Activated CD4-positive, alpha-beta T cell treated with anti-CD3 and anti-CD28 coated beads, Interleukin-2, amount 10 ng/mL, durations not matched to agents 24 days and 14 days (primary cell): ENCODE measurements at regions of chr9 and their contacts with region 1.

Region 1: DNA sequence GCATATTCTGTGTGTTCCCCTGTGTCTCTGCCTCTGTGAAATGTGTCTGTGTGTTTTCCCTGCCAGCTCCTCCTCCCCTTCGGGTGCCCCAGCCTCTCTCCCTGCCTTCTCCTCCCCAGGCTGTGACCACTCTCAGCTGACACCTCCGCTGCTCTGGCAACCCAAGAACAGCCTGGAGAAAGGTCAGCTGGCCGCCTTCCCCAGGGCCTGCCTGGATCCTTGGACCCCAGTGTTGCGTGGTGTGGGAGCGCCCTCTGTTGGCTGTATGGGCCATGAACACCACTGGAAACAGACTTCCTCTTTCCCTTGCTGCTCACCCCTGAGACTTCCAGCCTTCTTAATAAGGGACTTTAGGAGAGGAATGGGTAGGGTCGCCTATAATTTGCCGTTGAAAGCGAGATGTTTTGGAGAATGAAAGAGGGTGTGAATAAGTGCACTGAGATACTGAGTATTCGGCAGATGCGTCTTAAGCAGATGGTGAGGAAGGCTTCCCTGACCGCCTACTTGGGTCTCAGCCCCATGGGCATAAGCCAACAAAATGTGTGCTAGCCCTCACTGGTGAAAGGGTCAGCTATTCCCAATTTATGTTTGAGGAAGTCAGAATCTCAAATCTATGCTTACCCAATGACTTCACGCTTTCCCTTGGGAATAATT is 114.9 kb upstream of the TRIM32 start:
- DNase-seq: peak; percentile 67
- H3K4me3 Mint-ChIP-seq: no peak overlapping the region
- H3K27ac Mint-ChIP-seq: no peak overlapping the region
- H3K4me1 Mint-ChIP-seq: no peaks in the 10 kb centered on the region
- H3K27me3 Mint-ChIP-seq: no peaks in the 10 kb centered on the region

Region 2: DNA sequence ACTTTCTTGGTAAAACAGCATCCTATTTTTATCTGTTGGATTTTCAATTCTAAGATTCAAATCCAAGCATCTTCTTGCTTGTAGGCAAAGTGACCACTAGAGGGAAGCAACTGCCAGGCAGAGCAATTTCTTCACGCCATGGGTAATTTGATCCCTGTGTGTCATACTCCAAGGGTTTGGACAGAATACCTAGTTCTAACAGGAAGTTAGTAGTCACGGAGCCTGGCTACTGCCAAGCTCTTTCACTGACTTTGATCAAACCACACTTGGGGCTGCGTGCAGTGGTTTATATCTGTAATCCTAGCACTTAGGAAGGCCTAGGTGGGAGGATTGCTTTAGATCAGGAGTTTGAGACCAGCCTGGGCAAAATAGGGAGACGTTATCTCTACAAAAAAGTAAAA is 980.6 kb before region 1 on chr9:
- intact Hi-C with region 1: loop called (anchors 5 kb)
- DNase-seq: peak; percentile 57
- H3K4me3 Mint-ChIP-seq: no peak overlapping the region
- H3K27ac Mint-ChIP-seq: no peak overlapping the region
- H3K4me1 Mint-ChIP-seq: no peaks in the 10 kb centered on the region
- H3K27me3 Mint-ChIP-seq: peaks cover 15% of the 10 kb centered on the region

Region 3: DNA sequence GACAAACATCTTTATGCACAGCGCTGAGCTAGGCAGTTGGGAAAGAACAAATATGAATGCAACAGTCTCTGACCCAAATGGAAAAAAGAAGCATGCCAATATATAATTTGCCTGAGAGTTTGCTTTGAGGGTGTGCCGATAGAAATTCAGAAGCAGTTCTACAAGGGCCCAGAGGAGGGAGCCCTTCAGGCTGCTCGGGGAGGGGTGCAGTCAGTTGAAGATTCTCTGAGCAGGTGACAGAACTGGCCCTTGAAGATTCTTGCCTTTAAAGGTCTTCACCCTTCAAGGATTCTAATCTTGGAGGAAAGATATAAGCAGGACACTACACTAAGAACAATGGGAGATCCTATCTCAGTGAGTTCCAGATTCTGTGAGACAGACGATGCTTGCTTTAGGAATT is 422.4 kb before region 1 on chr9:
- intact Hi-C with region 1: loop called (anchors 10 kb)
- DNase-seq: no peak
- H3K4me3 Mint-ChIP-seq: no peak overlapping the region
- H3K27ac Mint-ChIP-seq: no peak overlapping the region
- H3K4me1 Mint-ChIP-seq: peaks cover 2% of the 10 kb centered on the region
- H3K27me3 Mint-ChIP-seq: peaks cover 39% of the 10 kb centered on the region

Region 4: DNA sequence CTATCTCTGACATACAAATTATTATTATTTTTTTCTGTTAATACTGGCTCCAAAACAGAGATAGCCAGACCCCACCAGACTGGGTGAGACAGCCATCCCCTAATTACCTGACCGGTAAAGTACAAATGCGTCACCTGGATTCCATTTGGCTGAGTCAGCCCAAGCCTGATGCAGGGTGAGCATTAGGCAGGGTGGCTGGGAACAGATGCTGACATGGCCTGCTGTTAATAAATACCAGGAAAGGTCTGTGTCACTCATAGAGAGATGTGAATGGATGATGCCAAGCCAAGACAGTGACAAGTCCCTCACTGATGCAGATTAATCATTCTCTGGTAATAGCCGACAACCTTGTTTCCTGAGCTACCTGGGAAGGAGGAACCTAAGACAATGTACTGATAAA is 298.3 kb after region 1 on chr9:
- intact Hi-C with region 1: no loop called
- DNase-seq: no peak
- H3K4me3 Mint-ChIP-seq: no peak overlapping the region
- H3K27ac Mint-ChIP-seq: no peak overlapping the region
- H3K4me1 Mint-ChIP-seq: no peaks in the 10 kb centered on the region
- H3K27me3 Mint-ChIP-seq: no peaks in the 10 kb centered on the region